ENCODE measurements at regions of chr1 and their contacts with region 1.

Region 1: DNA sequence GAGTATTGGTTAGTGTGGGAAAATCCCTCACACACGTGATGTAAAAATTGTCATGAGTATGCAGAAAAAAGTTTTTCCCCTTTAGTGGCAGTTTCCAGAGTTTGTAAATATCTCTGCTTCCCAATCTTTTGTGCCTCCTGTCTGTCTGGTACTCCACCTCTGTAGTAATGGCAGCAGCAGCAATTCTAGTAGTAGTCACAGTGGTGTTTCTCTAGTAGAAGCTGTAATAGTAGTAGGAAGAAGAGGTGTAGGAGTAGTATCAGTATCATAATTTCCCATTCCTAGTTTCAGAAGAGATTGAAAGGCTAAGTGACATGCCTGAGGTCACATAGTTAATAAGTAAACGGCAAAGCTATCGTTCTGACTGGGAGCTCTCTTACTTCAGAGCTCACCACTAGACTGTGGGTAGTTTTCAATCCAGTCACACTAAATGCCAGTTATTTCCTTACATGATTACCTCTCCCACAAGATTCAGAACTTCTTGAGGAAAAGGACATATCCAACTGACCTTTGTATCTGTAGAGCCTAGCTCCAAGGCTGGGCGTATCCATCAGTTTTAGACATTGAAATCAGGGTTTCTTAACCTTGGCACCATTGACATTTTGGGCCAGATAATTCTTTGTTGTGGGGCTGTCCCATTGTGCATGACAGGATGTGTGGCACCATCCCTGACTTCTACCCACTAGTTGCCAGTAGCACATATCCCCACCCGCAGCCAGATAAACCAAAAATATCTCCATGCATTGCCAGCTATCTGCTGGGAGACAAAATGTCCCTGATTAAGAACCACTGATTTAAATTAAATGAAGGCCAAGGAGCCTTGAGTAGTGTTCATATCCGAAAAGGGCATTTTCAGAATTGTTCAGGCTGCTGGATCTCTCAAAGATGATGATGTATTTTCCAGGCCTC is 135.9 kb downstream of the FGGY start:
- DNase-seq: peak; percentile 7
- H3K4me3 Mint-ChIP-seq: no peak overlapping the region
- H3K27ac Mint-ChIP-seq: no peak overlapping the region
- H3K4me1 Mint-ChIP-seq: peaks cover 17% of the 10 kb centered on the region
- H3K27me3 Mint-ChIP-seq: no peaks in the 10 kb centered on the region

Region 2: GRCh38 chr1:59332983-59333382 is 99.8 kb before region 1 on chr1:
- CTCF ChIA-PET with region 1: no interaction called
- intact Hi-C with region 1: loop called (anchors 5 kb)
- DNase-seq: peak; percentile 54
- H3K4me3 Mint-ChIP-seq: no peak overlapping the region
- H3K27ac Mint-ChIP-seq: no peak overlapping the region
- H3K4me1 Mint-ChIP-seq: peaks cover 26% of the 10 kb centered on the region
- H3K27me3 Mint-ChIP-seq: no peaks in the 10 kb centered on the region

Region 3: GRCh38 chr1:59396387-59396786 is 36.4 kb before region 1 on chr1:
- CTCF ChIA-PET with region 1: no interaction called
- intact Hi-C with region 1: no loop called
- DNase-seq: no peak
- H3K4me3 Mint-ChIP-seq: no peak overlapping the region
- H3K27ac Mint-ChIP-seq: no peak overlapping the region
- H3K4me1 Mint-ChIP-seq: peaks cover 5% of the 10 kb centered on the region
- H3K27me3 Mint-ChIP-seq: no peaks in the 10 kb centered on the region

Region 4: GRCh38 chr1:59560807-59561450 is 128.1 kb after region 1 on chr1:
- CTCF ChIA-PET with region 1: no interaction called
- intact Hi-C with region 1: no loop called
- DNase-seq: no peak
- H3K4me3 Mint-ChIP-seq: no peak overlapping the region
- H3K27ac Mint-ChIP-seq: no peak overlapping the region
- H3K4me1 Mint-ChIP-seq: no peaks in the 10 kb centered on the region
- H3K27me3 Mint-ChIP-seq: no peaks in the 10 kb centered on the region